Gastrocnemius medialis (tissue), 4 donors: ENCODE measurements at regions of chr11 and their contacts with region 1.

Region 1: DNA sequence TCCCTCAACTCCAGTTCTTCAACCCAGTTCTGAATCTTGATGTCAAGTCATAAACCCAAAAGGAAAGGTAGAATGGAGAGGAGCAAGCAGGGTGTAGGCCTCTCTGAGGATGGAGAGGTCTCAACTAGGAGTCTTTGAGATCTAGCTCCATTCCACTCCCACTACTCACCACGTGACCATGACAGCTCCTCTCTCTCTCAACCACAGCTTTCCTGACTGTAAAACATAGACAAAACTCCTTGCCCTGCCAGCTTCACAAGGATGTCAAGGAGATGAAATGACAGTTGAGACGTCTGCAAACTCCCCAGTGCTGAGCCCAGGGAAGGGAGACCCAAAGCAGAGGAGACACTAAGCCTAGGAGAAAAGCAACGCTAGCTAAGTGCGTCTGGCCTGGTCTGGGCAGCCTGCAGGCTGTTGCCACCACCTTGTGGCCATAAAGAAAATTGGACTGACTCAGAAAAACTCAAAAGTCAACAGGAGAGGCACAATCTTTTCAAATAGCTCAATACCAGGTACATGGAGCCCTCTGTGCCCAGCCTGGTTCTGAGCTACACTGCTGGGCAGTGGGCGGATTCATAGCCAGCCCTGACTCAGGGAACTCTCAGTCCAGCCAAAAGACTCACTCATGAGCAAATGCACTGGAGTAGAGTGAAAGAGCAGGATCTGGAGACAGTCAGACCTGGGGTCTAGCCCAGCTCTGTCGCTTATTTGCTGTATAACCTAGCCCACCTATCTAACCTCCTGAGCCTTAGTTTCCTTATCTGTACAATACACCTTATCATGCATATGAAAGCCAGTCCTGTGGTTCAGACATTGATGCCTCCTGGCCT is 3.4 kb downstream of the CLPB start:
- DNase-seq: no peak
- ATAC-seq: no peak
- H3K4me3 ChIP-seq: no peak overlapping the region
- H3K27ac ChIP-seq: no peak overlapping the region
- H3K4me1 ChIP-seq: peaks cover 16 to 31% of the 10 kb centered on the region in 2 donors
- H3K27me3 ChIP-seq: no peaks in the 10 kb centered on the region
- CTCF ChIP-seq: peak; percentile 53 to 76 (median 65)
- POLR2A ChIP-seq: no peak

Region 2: GRCh38 chr11:71543866-71544265 is 887.1 kb before region 1 on chr11:
- in situ Hi-C with region 1: no loop called
- intact Hi-C with region 1: no loop called
- DNase-seq: no peak
- ATAC-seq: no peak
- H3K4me3 ChIP-seq: no peak overlapping the region
- H3K27ac ChIP-seq: no peak overlapping the region
- H3K4me1 ChIP-seq: no peaks in the 10 kb centered on the region
- H3K27me3 ChIP-seq: no peaks in the 10 kb centered on the region
- CTCF ChIP-seq: no peak
- POLR2A ChIP-seq: no peak

Region 3: DNA sequence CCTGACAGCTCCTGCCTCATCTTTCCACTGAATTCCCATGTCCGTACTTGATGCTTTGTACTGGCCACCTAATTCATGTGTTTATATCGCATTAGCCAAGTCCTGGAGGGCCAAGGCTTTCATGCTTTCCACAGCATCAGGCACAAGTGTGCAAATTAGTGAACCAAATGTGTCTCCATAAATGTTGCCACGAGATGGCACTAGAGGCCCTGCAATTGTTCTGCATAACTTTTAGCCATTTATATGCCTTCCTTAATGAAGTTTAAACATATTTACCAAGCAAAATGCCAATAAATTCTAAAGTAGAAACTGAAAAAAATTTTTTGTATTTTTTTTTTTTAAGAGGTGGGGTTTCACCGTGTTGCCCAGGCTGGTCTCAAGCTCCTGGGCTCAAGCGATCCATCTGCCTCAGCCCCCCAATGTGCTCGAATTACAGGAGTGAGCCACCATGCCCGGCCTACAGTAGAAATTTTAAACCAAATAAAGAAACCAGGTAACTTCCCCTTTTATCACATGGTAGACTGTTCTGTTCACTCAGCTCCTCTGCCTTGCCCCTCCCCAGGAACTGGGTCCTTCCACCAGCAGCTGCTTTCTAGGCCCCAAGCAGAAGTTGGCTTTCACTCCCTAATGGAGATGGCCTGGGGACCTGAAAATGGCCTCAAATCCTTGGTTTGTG is 453.1 kb before region 1 on chr11:
- in situ Hi-C with region 1: loop called in 1 of 4 experiments (anchors 25 kb)
- intact Hi-C with region 1: no loop called
- DNase-seq: peak in 1 of 2 donors; percentile 45
- ATAC-seq: peak; percentile 54 to 79
- H3K4me3 ChIP-seq: no peak overlapping the region
- H3K27ac ChIP-seq: no peak overlapping the region
- H3K4me1 ChIP-seq: peaks cover 3 to 8% of the 10 kb centered on the region in 2 donors
- H3K27me3 ChIP-seq: no peaks in the 10 kb centered on the region
- CTCF ChIP-seq: peak; percentile 39 to 75 (median 69)
- POLR2A ChIP-seq: no peak

Region 4: DNA sequence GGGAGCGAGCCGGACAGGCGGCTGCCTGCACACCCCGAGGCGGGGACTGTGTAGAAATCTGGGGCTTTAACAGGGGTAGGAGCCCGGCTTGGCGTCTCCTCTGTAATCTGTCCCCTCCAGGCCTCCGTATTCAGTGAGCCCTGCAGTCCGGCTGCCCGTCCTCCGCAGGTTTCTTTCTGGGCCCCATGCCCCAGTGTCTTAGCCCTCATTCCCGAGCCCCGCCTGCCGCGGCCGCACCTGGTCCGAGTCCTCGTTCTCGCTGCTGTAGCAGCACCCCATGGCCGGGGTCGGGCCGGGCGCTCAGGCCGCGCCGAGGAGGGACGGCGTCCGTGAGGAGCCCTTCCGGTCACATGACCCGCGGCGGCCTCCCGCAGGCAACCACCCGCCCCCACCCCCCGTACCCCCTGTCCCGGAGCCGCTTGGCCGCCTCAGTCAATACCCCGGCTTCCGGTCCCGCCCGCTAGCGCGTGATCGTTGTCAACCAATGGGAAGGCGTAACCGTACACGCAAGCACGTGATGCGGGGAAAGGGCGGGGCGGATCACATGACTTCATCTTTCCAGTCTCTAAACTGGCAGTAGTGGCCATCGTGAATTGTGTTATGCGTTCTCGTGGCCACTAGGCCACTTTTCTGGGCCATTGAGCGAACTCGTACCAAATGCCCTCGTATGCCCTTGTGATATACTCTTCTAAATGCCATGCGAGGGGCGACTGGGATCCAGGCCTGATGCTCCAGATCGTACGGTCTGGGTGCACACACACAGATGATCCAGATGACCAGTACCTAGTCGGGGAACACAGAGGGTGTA is 327.8 kb before region 1 on chr11 and contains the start of gene LAMTOR1:
- in situ Hi-C with region 1: loop called in 2 of 4 experiments (anchors 10 kb)
- intact Hi-C with region 1: loop called (anchors 10 kb)
- DNase-seq: peak; percentile 100
- ATAC-seq: peak; percentile 90 to 94
- H3K4me3 ChIP-seq: peak within 1 kb of the TSS; percentile 71 to 95 (median 88)
- H3K27ac ChIP-seq: peak within 1 kb of the TSS; percentile 92 to 97 (median 93)
- H3K4me1 ChIP-seq: peaks cover 46 to 49% of the 10 kb centered on the region in 2 donors
- H3K27me3 ChIP-seq: no peaks in the 10 kb centered on the region
- CTCF ChIP-seq: peak; percentile 46 to 72 (median 60)
- POLR2A ChIP-seq: peak; percentile 83 to 85
- total RNA-seq, gene LAMTOR1: 75.0 to 146 (median 104) TPM

Region 5: DNA sequence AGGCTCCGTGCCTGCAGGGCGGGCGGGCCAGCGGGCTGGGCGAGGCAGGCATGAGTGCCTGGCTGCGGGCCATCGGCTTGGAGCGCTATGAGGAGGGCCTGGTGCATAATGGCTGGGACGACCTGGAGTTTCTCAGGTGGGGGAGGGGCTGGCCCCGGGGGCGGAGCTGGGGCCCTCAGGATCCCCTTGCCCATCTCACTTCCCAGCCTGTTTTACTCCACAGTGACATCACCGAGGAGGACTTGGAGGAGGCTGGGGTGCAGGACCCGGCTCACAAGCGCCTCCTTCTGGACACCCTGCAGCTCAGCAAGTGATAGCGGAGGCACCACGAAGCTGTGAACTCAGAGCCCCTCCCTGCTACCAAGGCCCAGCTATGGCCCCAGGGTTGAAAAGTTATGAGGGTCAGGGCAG is 192.9 kb before region 1 on chr11:
- in situ Hi-C with region 1: loop called in 1 of 4 experiments (anchors 10 kb)
- intact Hi-C with region 1: loop called (anchors 5 kb)
- DNase-seq: peak in 1 of 2 donors; percentile 27
- ATAC-seq: no peak
- H3K4me3 ChIP-seq: no peak overlapping the region
- H3K27ac ChIP-seq: no peak overlapping the region
- H3K4me1 ChIP-seq: peaks cover 10 to 22% of the 10 kb centered on the region in 2 donors
- H3K27me3 ChIP-seq: peaks cover 8 to 17% (median 15%) of the 10 kb centered on the region in 3 donors
- CTCF ChIP-seq: peak in 4 of 5 experiments; percentile 34 to 53 (median 50)
- POLR2A ChIP-seq: no peak

Region 6: DNA sequence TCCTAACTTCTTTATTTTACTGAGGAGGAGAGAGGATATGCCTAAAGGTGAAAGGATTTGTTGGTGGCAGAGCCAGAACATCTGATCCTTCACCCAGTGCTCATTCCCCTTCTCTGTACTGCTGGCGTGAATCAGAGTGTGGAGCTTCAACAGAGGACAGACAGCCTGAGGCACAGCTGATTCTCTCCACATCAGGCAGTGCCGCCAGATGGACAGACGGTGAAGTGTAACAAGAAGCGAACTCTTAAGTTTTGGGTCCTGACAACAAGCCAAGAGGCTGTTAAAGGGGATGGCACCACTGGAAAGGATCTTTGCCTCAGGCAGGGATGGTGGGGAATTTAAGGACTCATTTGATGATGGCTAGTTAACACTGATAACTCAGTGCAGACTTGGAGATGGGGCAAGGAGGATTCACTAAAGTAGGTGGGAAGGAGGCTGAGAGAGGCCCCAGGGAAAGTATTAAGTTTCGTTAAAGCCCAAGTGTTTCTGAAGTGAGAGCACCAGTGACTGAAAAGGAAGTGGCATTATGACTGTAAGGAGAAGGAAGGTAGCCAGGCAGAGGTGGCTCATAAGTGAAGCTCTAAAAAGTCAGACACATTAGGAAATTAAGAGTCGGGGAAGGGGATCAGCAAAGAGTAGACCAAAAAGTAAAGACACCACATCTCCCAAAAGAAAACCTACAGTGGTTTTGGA is 78.0 kb before region 1 on chr11:
- in situ Hi-C with region 1: no loop called
- intact Hi-C with region 1: loop called (anchors 5 kb)
- DNase-seq: no peak
- ATAC-seq: no peak
- H3K4me3 ChIP-seq: no peak overlapping the region
- H3K27ac ChIP-seq: no peak overlapping the region
- H3K4me1 ChIP-seq: peaks cover 23 to 28% of the 10 kb centered on the region in 2 donors
- H3K27me3 ChIP-seq: no peaks in the 10 kb centered on the region
- CTCF ChIP-seq: no peak
- POLR2A ChIP-seq: no peak

Region 7: DNA sequence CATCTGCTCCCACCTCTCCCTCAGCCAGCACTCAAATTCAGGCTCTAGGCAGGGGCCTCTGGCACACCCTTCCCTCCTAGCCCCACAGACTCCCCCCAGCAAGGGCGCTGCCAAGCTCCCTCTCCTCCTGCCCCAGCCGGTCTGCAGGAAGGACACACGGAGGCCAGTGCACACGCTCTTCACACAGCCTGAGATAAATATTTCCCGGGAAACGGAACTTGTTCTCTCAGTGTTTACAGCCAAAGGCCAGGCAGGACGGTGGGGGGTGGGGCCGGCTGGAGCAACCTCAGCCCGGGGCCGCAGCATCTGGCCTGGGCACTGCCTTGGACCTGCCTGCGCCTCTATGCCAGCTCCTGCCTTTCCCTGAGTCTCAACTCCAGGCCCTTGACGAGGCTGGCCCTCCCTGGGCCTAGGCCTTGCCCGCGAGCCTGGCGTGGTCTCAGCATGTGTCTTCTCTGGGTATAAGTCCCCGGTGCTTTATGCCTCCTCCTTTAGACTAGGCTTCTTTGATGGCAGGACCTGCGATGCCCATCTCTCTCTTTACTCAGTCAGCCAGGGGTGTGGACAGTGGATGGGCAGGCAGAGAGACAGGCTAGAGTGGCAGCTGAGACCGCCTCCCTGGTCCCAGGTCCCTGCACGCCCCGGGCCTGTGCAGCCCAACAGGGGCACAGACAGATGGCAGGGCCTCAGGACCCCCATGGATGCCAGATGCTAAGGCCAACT is 194.9 kb after region 1 on chr11:
- in situ Hi-C with region 1: no loop called
- intact Hi-C with region 1: no loop called
- DNase-seq: no peak
- ATAC-seq: peak; percentile 27 to 37
- H3K4me3 ChIP-seq: peak overlapping the region in 1 of 4 donors; percentile 13
- H3K27ac ChIP-seq: peak overlapping the region; percentile 54 to 81 (median 76)
- H3K4me1 ChIP-seq: peaks cover 40 to 46% of the 10 kb centered on the region in 2 donors
- H3K27me3 ChIP-seq: no peaks in the 10 kb centered on the region
- CTCF ChIP-seq: no peak
- POLR2A ChIP-seq: no peak

Region 8: GRCh38 chr11:72821883-72822799 is 391.2 kb after region 1 on chr11:
- in situ Hi-C with region 1: no loop called
- intact Hi-C with region 1: loop called (anchors 10 kb)
- DNase-seq: peak; percentile 73 to 88
- ATAC-seq: peak; percentile 80 to 83
- H3K4me3 ChIP-seq: peak overlapping the region; percentile 53 to 69 (median 66)
- H3K27ac ChIP-seq: peak overlapping the region; percentile 73 to 81 (median 76)
- H3K4me1 ChIP-seq: peaks cover 5 to 9% of the 10 kb centered on the region in 2 donors
- H3K27me3 ChIP-seq: no peaks in the 10 kb centered on the region
- CTCF ChIP-seq: peak in 3 of 5 experiments; percentile 31 to 49 (median 42)
- POLR2A ChIP-seq: peak; percentile 54 to 68

Region 9: DNA sequence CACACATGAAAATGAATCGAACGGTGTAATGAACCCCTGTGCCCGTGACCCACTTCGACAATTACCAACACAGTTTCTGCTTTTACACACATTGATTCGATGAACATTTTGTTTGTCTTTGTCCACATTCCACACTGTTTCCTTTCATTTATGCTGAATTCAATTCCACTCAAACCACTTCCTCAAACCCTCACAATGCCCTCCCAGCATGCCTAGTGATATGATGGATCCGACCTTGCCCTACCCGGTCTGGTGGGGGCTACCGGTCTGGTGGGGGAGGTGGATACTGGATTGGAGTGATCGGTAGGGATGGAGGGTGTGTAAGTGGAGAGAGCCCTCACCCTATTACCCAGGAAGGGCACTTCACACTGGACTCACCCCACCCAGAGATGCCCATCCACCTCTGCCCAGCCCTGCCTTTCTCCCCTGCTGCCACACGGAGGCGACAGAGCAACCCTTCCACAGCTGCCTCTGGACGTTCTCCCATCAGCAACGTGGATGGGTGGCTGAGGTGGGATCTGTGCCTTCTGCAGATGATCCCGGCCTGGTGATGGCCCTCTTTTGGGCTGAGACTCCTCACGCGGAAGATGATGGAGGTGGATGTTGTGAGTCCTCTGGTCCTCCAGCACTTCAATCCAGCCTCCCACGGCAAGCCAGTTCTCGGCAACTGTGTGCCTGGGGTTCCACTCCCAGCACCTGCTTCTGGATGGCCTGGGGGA is 754.2 kb after region 1 on chr11:
- in situ Hi-C with region 1: no loop called
- intact Hi-C with region 1: no loop called
- DNase-seq: peak; percentile 61 to 80
- ATAC-seq: peak; percentile 57 to 68
- H3K4me3 ChIP-seq: no peak overlapping the region
- H3K27ac ChIP-seq: peak overlapping the region; percentile 53 to 79 (median 70)
- H3K4me1 ChIP-seq: peaks cover 35 to 47% of the 10 kb centered on the region in 2 donors
- H3K27me3 ChIP-seq: no peaks in the 10 kb centered on the region
- CTCF ChIP-seq: peak; percentile 88 to 94 (median 93)
- POLR2A ChIP-seq: no peak